Activated CD8-positive, alpha-beta memory T cell treated with anti-CD3 and anti-CD28 coated beads, Interleukin-2, amount 10 ng/mL, durations not matched to agents 7 days and 5 days (primary cell): ENCODE measurements at regions of chr14 and their contacts with region 1.

Region 1: GRCh38 chr14:68663385-68664076 is 129.3 kb downstream of the ZFP36L1 start:
- DNase-seq: peak; percentile 76
- ATAC-seq: peak; percentile 93
- H3K4me3 Mint-ChIP-seq: peak overlapping the region; percentile 70
- H3K27ac Mint-ChIP-seq: peak overlapping the region; percentile 76
- H3K4me1 Mint-ChIP-seq: peaks cover 30% of the 10 kb centered on the region
- H3K27me3 Mint-ChIP-seq: no peaks in the 10 kb centered on the region

Region 2: GRCh38 chr14:68685419-68686204 is 22.1 kb after region 1 on chr14:
- CTCF ChIA-PET with region 1: interaction called, 12 read pairs
- DNase-seq: peak; percentile 87
- ATAC-seq: peak; percentile 86
- H3K4me3 Mint-ChIP-seq: peak overlapping the region; percentile 25
- H3K27ac Mint-ChIP-seq: peak overlapping the region; percentile 84
- H3K4me1 Mint-ChIP-seq: peaks cover 48% of the 10 kb centered on the region
- H3K27me3 Mint-ChIP-seq: no peaks in the 10 kb centered on the region

Region 3: DNA sequence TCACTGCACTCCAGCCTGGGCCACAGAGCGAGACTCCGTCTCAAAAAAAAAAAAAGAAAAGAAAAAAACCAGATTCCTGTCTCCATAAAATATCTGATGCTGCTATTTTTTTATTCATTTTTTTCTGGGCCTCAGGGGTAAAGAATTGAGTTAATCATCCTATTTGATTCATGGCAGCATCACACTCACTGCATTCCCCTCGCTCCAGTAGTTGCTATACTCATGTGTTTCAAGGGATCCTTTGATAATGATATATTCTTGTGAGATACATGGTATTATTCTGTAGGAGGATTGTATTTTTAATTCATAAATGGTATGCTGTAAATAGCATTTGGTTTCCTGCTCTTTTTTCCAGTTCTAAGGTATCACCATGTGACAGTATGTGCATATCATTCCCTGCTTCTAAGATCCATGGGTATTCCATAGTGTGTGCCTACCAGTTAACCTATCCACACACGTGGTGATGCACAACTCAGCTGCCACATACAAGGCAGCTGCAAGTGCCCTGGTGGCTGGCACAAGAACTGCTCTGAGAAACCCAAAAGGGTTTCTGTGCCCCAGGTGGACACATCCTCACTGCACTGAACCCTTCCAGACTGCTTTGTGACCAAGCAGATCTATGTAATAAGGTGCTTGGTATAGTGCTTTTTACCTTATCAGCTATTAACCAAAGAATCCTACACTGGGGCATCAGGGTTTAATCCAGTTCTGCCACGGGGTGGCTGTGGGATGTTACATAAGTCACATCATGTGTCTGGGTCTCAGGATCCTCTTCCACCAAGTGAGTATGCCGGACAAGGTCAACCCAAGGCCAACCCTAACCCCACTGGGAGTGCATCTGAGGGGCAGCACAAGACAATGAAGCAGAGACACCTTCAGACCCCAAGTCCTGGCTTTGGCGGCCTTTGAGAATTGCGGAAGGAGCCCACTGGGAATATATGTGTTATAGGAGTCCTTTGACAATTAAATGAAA is 54.8 kb after region 1 on chr14:
- CTCF ChIA-PET with region 1: no interaction called
- DNase-seq: no peak
- ATAC-seq: no peak
- H3K4me3 Mint-ChIP-seq: no peak overlapping the region
- H3K27ac Mint-ChIP-seq: no peak overlapping the region
- H3K4me1 Mint-ChIP-seq: peaks cover 20% of the 10 kb centered on the region
- H3K27me3 Mint-ChIP-seq: peaks cover 6% of the 10 kb centered on the region

Region 4: GRCh38 chr14:68926236-68926635 is 262.7 kb after region 1 on chr14:
- CTCF ChIA-PET with region 1: no interaction called
- DNase-seq: no peak
- ATAC-seq: no peak
- H3K4me3 Mint-ChIP-seq: no peak overlapping the region
- H3K27ac Mint-ChIP-seq: no peak overlapping the region
- H3K4me1 Mint-ChIP-seq: peaks cover 14% of the 10 kb centered on the region
- H3K27me3 Mint-ChIP-seq: peaks cover 6% of the 10 kb centered on the region